ENCODE measurements at regions of chr19 and their contacts with region 1.

Region 1: DNA sequence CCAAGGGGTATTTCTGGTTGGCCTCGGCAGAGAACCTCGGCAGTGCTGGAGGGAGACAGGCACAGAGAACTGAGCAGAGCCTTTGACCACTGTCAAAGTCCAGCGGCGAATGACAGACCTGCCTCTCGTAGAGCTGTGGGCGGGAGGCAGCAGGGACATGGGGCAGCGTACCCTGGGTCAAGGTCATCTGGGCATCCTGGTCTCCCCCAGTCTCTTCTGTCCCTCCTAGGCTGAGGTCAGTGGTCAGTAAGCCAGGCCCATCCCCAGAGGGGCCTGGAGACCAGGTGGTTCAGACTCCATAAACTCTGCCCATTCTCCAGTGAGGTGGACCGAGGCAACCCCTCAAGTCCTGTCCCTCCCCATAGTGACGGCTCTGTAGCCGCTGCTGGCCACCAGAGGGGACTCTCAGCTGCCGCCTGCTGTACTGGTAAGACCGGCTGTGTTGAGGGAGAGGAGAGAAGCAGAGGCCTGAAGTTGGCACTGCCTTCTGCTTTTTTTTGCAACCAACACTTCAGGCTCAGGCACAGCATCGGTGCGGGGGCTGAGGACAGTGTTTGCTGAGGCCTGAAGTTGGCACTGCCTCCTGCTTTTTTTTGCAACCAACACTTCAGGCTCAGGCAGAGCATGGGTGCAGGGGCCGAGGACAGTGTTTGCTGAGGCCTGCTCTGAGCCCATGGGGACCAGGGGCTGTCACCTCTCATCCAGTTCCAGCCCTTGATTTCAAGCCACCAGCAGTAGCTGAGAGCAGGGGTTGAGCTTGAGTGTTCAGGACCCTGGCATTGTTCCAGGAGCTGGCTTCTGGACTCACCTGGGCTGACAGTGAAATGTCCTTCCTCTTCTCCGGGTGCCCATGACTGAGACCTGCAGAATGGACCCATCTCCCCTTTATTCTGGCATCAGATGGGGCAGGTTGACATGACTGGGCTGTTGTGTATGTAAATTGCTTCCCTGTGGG is at the start of gene PGLYRP2:
- DNase-seq: peak; percentile 29 to 70 (median 61)
- ATAC-seq: peak; percentile 61 to 70
- H3K4me3 ChIP-seq: no peak within 1 kb of the TSS
- H3K27ac ChIP-seq: no peak within 1 kb of the TSS
- H3K4me1 ChIP-seq: no peaks in the 10 kb centered on the region
- H3K27me3 ChIP-seq: no peaks in the 10 kb centered on the region
- total RNA-seq, gene PGLYRP2: not detected

Region 2: GRCh38 chr19:15529774-15530372 is 50.2 kb after region 1 on chr19:
- intact Hi-C with region 1: loop called in 1 of 4 experiments (anchors 10 kb)
- DNase-seq: no peak
- ATAC-seq: no peak
- H3K4me3 ChIP-seq: no peak overlapping the region
- H3K27ac ChIP-seq: no peak overlapping the region
- H3K4me1 ChIP-seq: no peaks in the 10 kb centered on the region
- H3K27me3 ChIP-seq: no peaks in the 10 kb centered on the region

Measured in right cardiac atrium (tissue), 5 donors.